ENCODE measurements at regions of chr12 and their contacts with region 1.

Region 1: GRCh38 chr12:71780237-71780822 is 25.7 kb downstream of the RAB21 start:
- DNase-seq: no peak
- ATAC-seq: peak; percentile 47
- H3K4me3 Mint-ChIP-seq: no peak overlapping the region
- H3K27ac Mint-ChIP-seq: peak overlapping the region; percentile 72
- H3K4me1 Mint-ChIP-seq: peaks cover 19% of the 10 kb centered on the region
- H3K27me3 Mint-ChIP-seq: no peaks in the 10 kb centered on the region
- CTCF ChIP-seq: no peak

Region 2: GRCh38 chr12:71754461-71755145 is 25.7 kb before region 1 on chr12 and contains the start of gene RAB21:
- CTCF ChIA-PET with region 1: interaction called, 10 read pairs
- POLR2A ChIA-PET with region 1: interaction called, 5 read pairs
- intact Hi-C with region 1: loop called (anchors 1 kb)
- DNase-seq: peak; percentile 95
- ATAC-seq: peak; percentile 84
- H3K4me3 Mint-ChIP-seq: peak within 1 kb of the TSS; percentile 96
- H3K27ac Mint-ChIP-seq: peak within 1 kb of the TSS; percentile 97
- H3K4me1 Mint-ChIP-seq: peaks cover 43% of the 10 kb centered on the region
- H3K27me3 Mint-ChIP-seq: no peaks in the 10 kb centered on the region
- CTCF ChIP-seq: no peak
- total RNA-seq, gene RAB21: 112 and 121 TPM in 2 replicates

Region 3: DNA sequence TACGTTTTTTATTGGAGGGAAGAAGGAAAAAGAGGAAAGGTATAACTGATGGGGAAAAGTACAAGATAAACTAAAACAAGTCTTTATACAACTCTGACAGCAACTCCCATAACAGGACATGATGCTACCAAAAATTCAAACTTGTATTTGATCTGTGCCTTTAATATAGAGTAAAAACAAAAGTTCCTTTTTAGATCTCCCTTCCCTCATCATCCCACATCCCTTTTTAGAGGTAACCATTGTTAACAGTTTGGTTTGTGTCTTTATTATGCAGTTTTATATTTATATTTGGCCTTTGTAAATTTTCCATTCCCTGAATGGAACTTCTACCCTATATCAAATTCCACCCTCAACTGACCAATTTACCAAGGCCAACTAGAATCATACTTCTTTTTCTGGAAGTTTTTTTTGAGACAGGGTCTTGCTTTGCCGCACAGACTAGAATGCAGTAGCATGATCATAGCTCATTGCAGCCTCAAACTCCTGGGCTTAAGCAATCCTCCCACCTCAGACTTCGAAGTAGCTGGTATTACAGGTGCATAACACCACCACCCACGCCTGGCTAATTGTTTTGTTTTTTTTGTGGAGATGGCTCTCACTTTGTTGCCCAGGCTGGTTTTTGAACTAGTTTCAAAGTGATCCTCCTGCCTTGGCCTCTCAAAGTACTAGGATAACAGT is 11.3 kb after region 1 on chr12:
- CTCF ChIA-PET with region 1: interaction called, 7 read pairs
- POLR2A ChIA-PET with region 1: no interaction called
- intact Hi-C with region 1: loop called (anchors 1 kb)
- DNase-seq: no peak
- ATAC-seq: no peak
- H3K4me3 Mint-ChIP-seq: no peak overlapping the region
- H3K27ac Mint-ChIP-seq: no peak overlapping the region
- H3K4me1 Mint-ChIP-seq: no peaks in the 10 kb centered on the region
- H3K27me3 Mint-ChIP-seq: no peaks in the 10 kb centered on the region
- CTCF ChIP-seq: no peak

Region 4: DNA sequence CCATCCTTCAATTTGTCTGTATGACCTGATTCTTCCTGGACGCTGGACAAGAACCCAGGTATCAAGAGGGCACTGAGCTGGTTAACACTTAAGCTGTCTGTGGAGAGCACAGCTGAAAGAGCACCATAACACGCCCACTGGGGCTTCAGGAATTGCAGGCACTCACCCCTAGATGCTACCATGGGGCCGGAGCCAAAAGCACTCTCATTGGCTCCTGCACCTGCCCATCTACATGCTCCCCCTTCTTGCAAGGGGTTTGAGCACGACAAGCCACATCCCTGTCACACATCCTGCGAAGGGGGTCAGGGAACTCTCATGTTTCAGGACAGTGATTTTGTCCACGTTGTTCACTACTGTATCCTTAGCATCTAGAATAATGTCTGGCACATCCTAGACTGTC is 24.2 kb after region 1 on chr12:
- CTCF ChIA-PET with region 1: no interaction called
- POLR2A ChIA-PET with region 1: no interaction called
- intact Hi-C with region 1: no loop called
- DNase-seq: no peak
- ATAC-seq: no peak
- H3K4me3 Mint-ChIP-seq: no peak overlapping the region
- H3K27ac Mint-ChIP-seq: no peak overlapping the region
- H3K4me1 Mint-ChIP-seq: no peaks in the 10 kb centered on the region
- H3K27me3 Mint-ChIP-seq: peaks cover 14% of the 10 kb centered on the region
- CTCF ChIP-seq: no peak

Region 5: DNA sequence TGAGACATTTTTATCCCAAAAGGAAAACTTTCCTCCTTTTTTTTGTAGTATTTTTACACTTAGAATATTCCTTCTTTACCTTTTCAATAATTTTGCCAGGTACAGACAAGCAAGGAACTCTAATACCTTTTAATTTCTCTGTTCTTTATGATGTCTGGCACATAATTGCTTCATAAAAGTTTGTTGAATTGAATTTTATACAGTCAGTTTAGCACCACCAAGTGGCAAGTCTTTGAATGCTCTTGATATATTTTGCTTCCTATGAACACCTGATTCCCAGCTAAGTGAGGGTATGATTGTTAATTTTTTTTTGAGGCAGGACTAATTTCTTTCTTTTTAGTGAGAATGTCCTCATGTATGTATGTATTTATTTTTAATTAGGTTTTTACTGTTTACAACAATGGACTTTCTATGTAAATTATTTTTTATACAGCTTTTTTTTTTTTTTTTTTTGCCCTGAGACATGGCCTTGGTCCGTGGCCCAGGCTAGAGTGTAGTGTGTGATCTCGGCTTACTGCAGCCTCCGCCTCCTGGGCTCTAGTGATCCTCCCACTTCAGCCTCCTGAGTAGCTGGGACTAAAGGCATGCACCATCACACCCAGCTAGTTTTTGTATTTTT is 66.1 kb after region 1 on chr12:
- CTCF ChIA-PET with region 1: interaction called, 47 read pairs
- POLR2A ChIA-PET with region 1: interaction called, 4 read pairs
- intact Hi-C with region 1: loop called (anchors 1 kb)
- DNase-seq: no peak
- ATAC-seq: no peak
- H3K4me3 Mint-ChIP-seq: no peak overlapping the region
- H3K27ac Mint-ChIP-seq: no peak overlapping the region
- H3K4me1 Mint-ChIP-seq: peaks cover 14% of the 10 kb centered on the region
- H3K27me3 Mint-ChIP-seq: no peaks in the 10 kb centered on the region
- CTCF ChIP-seq: no peak

Region 6: GRCh38 chr12:72346363-72346944 is 566.1 kb after region 1 on chr12:
- CTCF ChIA-PET with region 1: no interaction called
- POLR2A ChIA-PET with region 1: no interaction called
- intact Hi-C with region 1: loop called (anchors 5 kb)
- DNase-seq: no peak
- ATAC-seq: peak; percentile 40
- H3K4me3 Mint-ChIP-seq: no peak overlapping the region
- H3K27ac Mint-ChIP-seq: no peak overlapping the region
- H3K4me1 Mint-ChIP-seq: no peaks in the 10 kb centered on the region
- H3K27me3 Mint-ChIP-seq: no peaks in the 10 kb centered on the region
- CTCF ChIP-seq: no peak

Region 7: DNA sequence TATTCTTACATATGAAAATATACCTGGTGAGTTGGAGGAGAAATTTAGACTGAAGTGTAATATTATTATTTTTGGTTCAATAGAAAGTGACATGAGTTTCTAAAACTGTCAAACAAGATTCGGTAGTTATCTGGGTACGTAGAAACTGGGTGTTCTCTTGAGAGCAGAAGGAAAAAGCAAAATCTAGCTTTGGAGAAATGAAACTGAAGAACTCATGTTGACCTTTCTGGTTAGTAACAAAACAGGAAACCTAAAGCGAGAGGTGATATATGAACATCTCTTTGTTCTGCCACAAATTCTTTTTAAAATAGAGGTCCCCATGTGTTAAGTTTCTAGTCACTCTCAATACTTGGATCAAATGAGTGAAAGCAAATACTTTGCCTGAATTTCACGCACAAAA is 893.5 kb after region 1 on chr12:
- CTCF ChIA-PET with region 1: no interaction called
- POLR2A ChIA-PET with region 1: no interaction called
- intact Hi-C with region 1: no loop called
- DNase-seq: no peak
- ATAC-seq: no peak
- H3K4me3 Mint-ChIP-seq: no peak overlapping the region
- H3K27ac Mint-ChIP-seq: no peak overlapping the region
- H3K4me1 Mint-ChIP-seq: peaks cover 6% of the 10 kb centered on the region
- H3K27me3 Mint-ChIP-seq: no peaks in the 10 kb centered on the region
- CTCF ChIP-seq: no peak